Naive thymus-derived CD4-positive, alpha-beta T cell (primary cell): ENCODE measurements at regions of chr2 and their contacts with region 1.

Region 1: DNA sequence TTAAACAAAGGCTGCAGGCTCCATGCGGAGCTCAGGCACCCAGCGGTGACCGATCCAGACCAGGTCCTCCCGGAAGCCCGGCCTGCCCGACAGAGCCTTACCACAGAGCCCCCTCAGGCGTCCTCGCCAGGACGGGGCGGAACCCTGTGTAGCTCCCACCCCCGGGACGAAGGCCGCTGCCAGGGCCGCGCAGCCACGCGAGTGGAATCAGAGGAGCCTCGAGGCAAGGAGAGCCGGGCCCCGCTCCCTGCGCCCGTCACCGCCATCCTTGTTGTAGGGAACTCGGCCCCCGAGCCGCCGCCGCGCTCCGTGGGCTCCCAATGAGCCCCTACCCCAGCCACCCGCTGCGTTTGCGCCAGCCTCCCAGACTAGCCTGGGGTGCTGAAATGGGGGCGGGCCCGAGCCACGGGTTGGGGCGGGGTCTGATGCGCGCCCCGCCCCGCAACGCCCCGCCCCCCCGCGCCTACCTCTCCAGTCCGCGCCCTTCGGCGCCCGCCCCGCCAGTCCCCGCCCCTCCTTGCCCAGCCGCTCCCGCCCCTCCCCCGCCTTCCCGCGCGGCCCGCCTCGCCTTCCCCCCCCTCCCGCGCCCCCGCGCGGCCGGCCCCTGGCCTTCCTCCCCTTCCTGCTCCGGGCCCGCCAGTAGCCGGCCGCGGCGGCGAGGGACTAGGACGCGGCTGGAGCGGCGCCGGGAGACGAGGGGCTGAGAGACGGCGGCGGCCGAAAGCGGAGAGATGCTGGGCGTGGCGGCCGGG is at the start of gene LIMS1:
- DNase-seq: peak; percentile 69 to 85 (median 79)
- ATAC-seq: peak; percentile 98
- H3K4me3 ChIP-seq: peak within 1 kb of the TSS; percentile 93
- H3K4me3 Mint-ChIP-seq: peak within 1 kb of the TSS; percentile 86 to 99 (median 95)
- H3K27ac ChIP-seq: peak within 1 kb of the TSS; percentile 76
- H3K27ac Mint-ChIP-seq: peak within 1 kb of the TSS; percentile 34 to 96 (median 89)
- H3K4me1 ChIP-seq: peaks cover 3 to 9% of the 10 kb centered on the region in 2 donors
- H3K4me1 Mint-ChIP-seq: peaks cover 20 to 59% (median 28%) of the 10 kb centered on the region in 7 donors
- H3K27me3 ChIP-seq: no peaks in the 10 kb centered on the region
- H3K27me3 Mint-ChIP-seq: no peaks in the 10 kb centered on the region
- total RNA-seq, gene LIMS1: 25.3 to 75.3 (median 49.9) TPM

Region 2: DNA sequence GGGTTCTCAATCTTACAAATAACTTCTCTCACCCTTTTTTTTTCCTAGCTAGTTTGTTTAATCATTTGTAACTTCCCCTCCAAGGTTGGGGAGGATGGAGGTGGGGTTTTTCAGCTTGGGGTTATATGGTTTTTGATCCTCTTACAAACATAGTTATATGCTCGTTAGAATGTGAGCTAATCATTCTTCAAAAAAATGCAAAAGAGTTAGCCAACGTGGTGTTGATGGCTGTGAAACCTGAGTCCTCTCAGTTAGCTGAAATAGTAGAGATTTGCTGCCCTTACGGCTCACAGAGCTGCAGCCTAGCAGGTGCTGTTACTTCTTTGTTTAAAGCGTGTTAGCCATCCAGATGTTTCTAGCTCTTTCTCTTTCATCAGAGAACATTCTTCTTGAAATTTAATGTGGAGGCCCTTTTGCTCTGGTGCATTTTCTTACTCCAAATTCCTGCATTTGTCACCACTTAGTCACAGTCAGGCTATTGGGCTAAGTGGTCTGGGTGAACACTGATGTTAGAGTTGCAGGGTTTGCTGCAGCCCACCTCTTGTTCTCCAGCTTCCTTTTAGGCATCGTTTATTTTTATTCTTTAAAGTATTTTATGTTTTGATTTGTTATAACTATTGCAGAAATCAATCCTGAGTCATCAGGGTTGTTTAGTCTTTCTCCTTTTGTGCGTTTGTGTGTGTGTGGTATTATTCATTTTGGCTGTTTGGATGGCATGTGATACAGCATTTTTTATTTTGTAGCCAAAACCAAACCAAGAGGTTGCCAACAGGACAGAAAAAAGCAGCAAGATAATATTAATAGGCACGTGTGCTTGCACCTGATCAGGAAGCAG is 41.3 kb after region 1 on chr2:
- CTCF ChIA-PET with region 1: no interaction called
- POLR2A ChIA-PET with region 1: no interaction called
- intact Hi-C with region 1: no loop called
- DNase-seq: no peak
- ATAC-seq: no peak
- H3K4me3 ChIP-seq: no peak overlapping the region
- H3K4me3 Mint-ChIP-seq: no peak overlapping the region
- H3K27ac ChIP-seq: no peak overlapping the region
- H3K27ac Mint-ChIP-seq: no peak overlapping the region
- H3K4me1 ChIP-seq: no peaks in the 10 kb centered on the region
- H3K4me1 Mint-ChIP-seq: peaks cover 0 to 20% (median 7%) of the 10 kb centered on the region in 7 donors
- H3K27me3 ChIP-seq: no peaks in the 10 kb centered on the region
- H3K27me3 Mint-ChIP-seq: no peaks in the 10 kb centered on the region

Region 3: DNA sequence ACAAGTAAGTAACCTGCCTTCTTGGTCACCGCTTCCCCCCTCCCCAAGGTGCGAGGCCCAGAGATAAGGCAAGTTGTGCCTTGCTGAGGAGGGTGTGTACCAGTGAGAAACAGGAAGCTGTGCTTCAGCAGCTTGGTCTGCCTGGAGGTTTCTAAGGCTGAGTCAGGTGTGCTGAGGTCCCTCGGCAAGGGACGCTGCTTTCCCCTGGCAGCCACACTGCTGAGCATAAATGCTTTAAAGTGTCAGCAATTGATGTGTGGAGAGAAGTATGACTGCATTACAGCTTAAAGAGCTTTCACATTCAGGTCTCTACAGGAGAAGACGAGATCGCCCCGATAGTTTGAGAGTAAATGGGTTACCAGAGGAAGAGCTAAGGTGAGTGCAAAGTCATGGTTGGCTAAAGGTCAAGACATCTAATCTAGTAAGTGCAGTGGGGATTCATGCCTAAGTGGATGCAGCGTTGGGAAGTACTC is 87.1 kb after region 1 on chr2:
- CTCF ChIA-PET with region 1: interaction called, 3 read pairs
- POLR2A ChIA-PET with region 1: interaction called, 3 read pairs
- intact Hi-C with region 1: loop called in 1 of 2 experiments (anchors 5 kb)
- DNase-seq: peak; percentile 32 to 80 (median 75)
- ATAC-seq: peak; percentile 97
- H3K4me3 ChIP-seq: peak overlapping the region; percentile 59
- H3K4me3 Mint-ChIP-seq: peak overlapping the region; percentile 87 to 96 (median 91)
- H3K27ac ChIP-seq: peak overlapping the region; percentile 74
- H3K27ac Mint-ChIP-seq: peak overlapping the region; percentile 91 to 97 (median 94)
- H3K4me1 ChIP-seq: peaks cover 36 to 64% of the 10 kb centered on the region in 2 donors
- H3K4me1 Mint-ChIP-seq: peaks cover 44 to 93% (median 84%) of the 10 kb centered on the region in 7 donors
- H3K27me3 ChIP-seq: no peaks in the 10 kb centered on the region
- H3K27me3 Mint-ChIP-seq: no peaks in the 10 kb centered on the region

Region 4: GRCh38 chr2:108719149-108720044 is 185.4 kb after region 1 on chr2 and contains the start of gene RANBP2:
- CTCF ChIA-PET with region 1: no interaction called
- POLR2A ChIA-PET with region 1: no interaction called
- intact Hi-C with region 1: loop called (anchors 1 kb)
- DNase-seq: peak; percentile 86 to 95 (median 93)
- ATAC-seq: peak; percentile 98
- H3K4me3 ChIP-seq: peak within 1 kb of the TSS; percentile 97
- H3K4me3 Mint-ChIP-seq: peak within 1 kb of the TSS; percentile 94 to 98 (median 97)
- H3K27ac ChIP-seq: peak within 1 kb of the TSS; percentile 96
- H3K27ac Mint-ChIP-seq: peak within 1 kb of the TSS; percentile 97 to 99 (median 99)
- H3K4me1 ChIP-seq: peaks cover 5 to 6% of the 10 kb centered on the region in 2 donors
- H3K4me1 Mint-ChIP-seq: peaks cover 14 to 43% (median 31%) of the 10 kb centered on the region in 7 donors
- H3K27me3 ChIP-seq: no peaks in the 10 kb centered on the region
- H3K27me3 Mint-ChIP-seq: no peaks in the 10 kb centered on the region
- total RNA-seq, gene RANBP2: 63.4 to 118 (median 88.6) TPM

Region 5: DNA sequence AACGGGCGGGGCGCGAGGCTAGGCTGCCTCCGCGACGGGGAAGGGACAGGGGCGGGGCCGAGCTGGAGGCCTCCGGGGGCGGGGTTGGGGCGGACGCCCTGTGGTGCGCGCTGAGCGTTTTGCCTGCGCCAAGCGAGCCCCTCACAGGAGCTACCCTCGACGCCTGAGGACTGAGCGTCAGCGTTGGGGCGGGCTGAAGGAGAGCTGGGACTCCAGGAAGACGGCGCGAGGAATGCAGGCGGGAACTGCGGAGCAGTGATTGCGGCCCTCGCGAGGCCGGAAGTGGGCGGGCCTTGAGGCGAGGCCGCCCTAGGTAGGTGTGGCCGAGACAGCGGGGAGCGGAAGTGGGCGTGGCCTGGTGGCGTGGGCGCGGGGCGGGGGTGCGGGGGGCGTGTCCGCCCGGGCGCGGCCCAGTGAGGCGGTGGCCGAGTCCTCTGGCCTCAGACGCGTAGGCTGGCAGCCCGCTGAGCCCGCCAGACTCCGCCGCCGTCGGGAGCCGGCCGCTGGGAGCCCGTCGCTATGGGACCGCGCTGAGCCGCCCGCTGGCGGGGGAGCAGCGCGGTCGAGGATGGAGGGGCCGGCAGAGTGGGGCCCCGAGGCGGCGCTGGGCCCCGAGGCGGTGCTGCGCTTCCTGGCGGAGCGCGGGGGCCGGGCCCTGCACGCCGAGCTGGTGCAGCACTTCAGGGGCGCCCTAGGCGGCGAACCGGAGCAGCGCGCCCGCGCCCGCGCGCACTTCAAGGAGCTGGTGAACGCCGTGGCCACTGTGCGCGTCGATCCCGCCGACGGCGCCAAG is 1080.1 kb after region 1 on chr2 and contains the starts of genes SEPTIN10 and SOWAHC:
- CTCF ChIA-PET with region 1: no interaction called
- POLR2A ChIA-PET with region 1: no interaction called
- intact Hi-C with region 1: loop called in 1 of 2 experiments (anchors 10 kb)
- DNase-seq: peak; percentile 71 to 86 (median 84)
- ATAC-seq: peak; percentile 96
- H3K4me3 ChIP-seq: peak within 1 kb of the TSS; percentile 64
- H3K4me3 Mint-ChIP-seq: peak within 1 kb of the TSS; percentile 85 to 96 (median 90)
- H3K27ac ChIP-seq: no peak within 1 kb of the TSS
- H3K27ac Mint-ChIP-seq: peak within 1 kb of the TSS in 8 of 9 donors; percentile 27 to 89 (median 80)
- H3K4me1 ChIP-seq: no peaks in the 10 kb centered on the region
- H3K4me1 Mint-ChIP-seq: peaks cover 0 to 26% (median 16%) of the 10 kb centered on the region in 7 donors
- H3K27me3 ChIP-seq: peaks cover 3 to 23% of the 10 kb centered on the region in 2 donors
- H3K27me3 Mint-ChIP-seq: peaks cover 58 to 83% (median 62%) of the 10 kb centered on the region in 5 donors
- total RNA-seq, gene SEPTIN10: 0.94 to 5.9 (median 2.0) TPM
- total RNA-seq, gene SOWAHC: 0.17 to 1.2 (median 0.94) TPM